ENCODE measurements at regions of chr9 and their contacts with region 1.

Region 1: DNA sequence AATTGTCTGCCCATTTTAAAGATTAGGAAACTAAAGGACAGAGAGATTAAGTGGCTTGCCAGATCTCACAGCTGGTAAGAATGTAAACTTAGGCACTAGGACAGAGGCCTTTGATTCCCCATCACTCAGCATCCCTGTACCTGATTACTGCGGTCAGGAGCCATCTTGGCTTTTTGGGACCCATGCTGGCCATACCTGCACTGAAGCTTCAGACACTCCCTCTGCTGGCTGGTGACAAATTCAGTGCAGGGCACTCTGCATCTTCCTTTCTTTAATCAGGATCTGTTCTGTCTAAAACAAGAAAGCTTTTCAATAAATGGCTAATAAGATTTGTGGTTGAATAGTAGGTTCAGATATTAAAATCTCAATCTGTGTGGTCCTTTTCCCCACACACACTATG is 215.5 kb upstream of the RORB start:
- DNase-seq: no peak
- ATAC-seq: peak; percentile 72
- H3K4me3 ChIP-seq: no peak overlapping the region
- H3K27ac ChIP-seq: no peak overlapping the region
- H3K4me1 ChIP-seq: peaks cover 4% of the 10 kb centered on the region; the same call in 1 of the 2 replicates
- H3K27me3 ChIP-seq: no peaks in the 10 kb centered on the region
- CTCF ChIP-seq: peak in 2 of 3 experiments; percentile 38 to 39; a peak in 3 of 6 replicates
- EP300 ChIP-seq: no peak
- POLR2A ChIP-seq: no peak
- RAD21 ChIP-seq: peak; percentile 40

Region 2: GRCh38 chr9:73916016-73916673 is 365.5 kb before region 1 on chr9:
- CTCF ChIA-PET with region 1: interaction called, 3 read pairs
- POLR2A ChIA-PET with region 1: no interaction called
- RAD21 ChIA-PET with region 1: no interaction called
- SMC1A ChIA-PET with region 1: no interaction called
- in situ Hi-C with region 1: no loop called
- intact Hi-C with region 1: loop called (anchors 10 kb)
- DNase-seq: no peak
- ATAC-seq: no peak
- H3K4me3 ChIP-seq: no peak overlapping the region
- H3K27ac ChIP-seq: no peak overlapping the region
- H3K4me1 ChIP-seq: no peaks in the 10 kb centered on the region
- H3K27me3 ChIP-seq: no peaks in the 10 kb centered on the region
- CTCF ChIP-seq: no peak; a peak in 1 of 6 replicates
- EP300 ChIP-seq: no peak
- POLR2A ChIP-seq: no peak
- RAD21 ChIP-seq: no peak

Region 3: GRCh38 chr9:74205056-74205455 is 76.6 kb before region 1 on chr9:
- CTCF ChIA-PET with region 1: no interaction called
- POLR2A ChIA-PET with region 1: no interaction called
- RAD21 ChIA-PET with region 1: no interaction called
- SMC1A ChIA-PET with region 1: no interaction called
- in situ Hi-C with region 1: no loop called
- intact Hi-C with region 1: no loop called
- DNase-seq: no peak
- ATAC-seq: no peak
- H3K4me3 ChIP-seq: no peak overlapping the region
- H3K27ac ChIP-seq: no peak overlapping the region
- H3K4me1 ChIP-seq: no peaks in the 10 kb centered on the region
- H3K27me3 ChIP-seq: no peaks in the 10 kb centered on the region
- CTCF ChIP-seq: 0 out of 6 replicates have a peak, but pooled peaks of 1 of the 3 experiments have one; percentile 7
- EP300 ChIP-seq: no peak
- POLR2A ChIP-seq: no peak
- RAD21 ChIP-seq: no peak